ENCODE measurements at regions of chr2 and their contacts with region 1.

Region 1: GRCh38 chr2:206693399-206694137 is 24.6 kb downstream of the DYTN start:
- DNase-seq: no peak
- H3K4me3 ChIP-seq: no peak overlapping the region
- H3K27ac ChIP-seq: no peak overlapping the region
- H3K4me1 ChIP-seq: no peaks in the 10 kb centered on the region
- H3K27me3 ChIP-seq: no peaks in the 10 kb centered on the region
- CTCF ChIP-seq: peak; percentile 51 to 71 (median 58)
- EP300 ChIP-seq: no peak
- POLR2A ChIP-seq: no peak

Region 2: DNA sequence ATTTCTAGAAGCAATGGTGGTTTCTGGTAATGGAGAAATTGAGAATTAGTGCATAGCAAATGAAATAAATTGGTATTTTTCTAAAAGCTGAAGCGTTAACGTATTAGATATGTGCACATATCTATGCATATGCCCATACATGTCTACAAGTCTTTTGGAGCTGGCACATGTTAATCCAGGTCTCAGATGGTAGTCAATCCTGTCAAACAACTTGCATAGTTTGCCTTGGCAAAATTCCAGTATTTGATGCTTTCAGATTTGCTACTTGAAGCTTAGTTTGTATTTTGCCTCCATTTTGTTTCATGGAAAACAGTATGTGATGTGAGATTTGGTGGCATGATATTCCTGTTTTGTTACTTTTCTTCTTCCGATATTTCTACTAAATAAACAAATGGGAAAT is 1843.7 kb before region 1 on chr2:
- in situ Hi-C with region 1: no loop called
- intact Hi-C with region 1: no loop called
- DNase-seq: no peak
- H3K4me3 ChIP-seq: no peak overlapping the region
- H3K27ac ChIP-seq: no peak overlapping the region
- H3K4me1 ChIP-seq: no peaks in the 10 kb centered on the region
- H3K27me3 ChIP-seq: no peaks in the 10 kb centered on the region
- CTCF ChIP-seq: no peak
- EP300 ChIP-seq: no peak
- POLR2A ChIP-seq: no peak

Region 3: DNA sequence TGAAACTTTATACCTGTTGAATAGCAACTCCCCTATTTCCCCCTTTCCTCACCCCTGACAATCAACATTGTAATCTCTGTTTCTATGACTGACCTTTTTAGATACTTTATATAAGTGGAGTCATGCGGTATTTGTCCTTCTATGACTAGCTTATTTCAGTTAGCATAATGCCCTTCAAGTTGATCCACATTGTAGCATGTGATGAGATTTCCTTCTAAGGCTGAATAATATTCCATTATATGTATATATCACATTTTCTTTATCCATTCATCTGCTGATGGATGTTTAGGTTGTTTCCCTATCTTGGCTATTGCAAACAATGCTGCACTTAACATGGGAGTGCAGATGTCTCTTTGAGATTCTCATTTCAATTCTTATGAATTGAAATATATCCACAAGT is 81.3 kb after region 1 on chr2:
- in situ Hi-C with region 1: loop called in 2 of 4 experiments (anchors 10 kb)
- intact Hi-C with region 1: no loop called
- DNase-seq: no peak
- H3K4me3 ChIP-seq: no peak overlapping the region
- H3K27ac ChIP-seq: no peak overlapping the region
- H3K4me1 ChIP-seq: no peaks in the 10 kb centered on the region
- H3K27me3 ChIP-seq: no peaks in the 10 kb centered on the region
- CTCF ChIP-seq: no peak
- EP300 ChIP-seq: no peak
- POLR2A ChIP-seq: no peak

Region 4: GRCh38 chr2:206783718-206784117 is 90.2 kb after region 1 on chr2:
- in situ Hi-C with region 1: loop called in 2 of 4 experiments (anchors 10 kb)
- intact Hi-C with region 1: no loop called
- DNase-seq: no peak
- H3K4me3 ChIP-seq: no peak overlapping the region
- H3K27ac ChIP-seq: no peak overlapping the region
- H3K4me1 ChIP-seq: peaks cover 0 to 3% (median 0%) of the 10 kb centered on the region in 4 donors
- H3K27me3 ChIP-seq: no peaks in the 10 kb centered on the region
- CTCF ChIP-seq: peak in 2 of 5 experiments; percentile 23 to 24
- EP300 ChIP-seq: no peak
- POLR2A ChIP-seq: no peak

Region 5: DNA sequence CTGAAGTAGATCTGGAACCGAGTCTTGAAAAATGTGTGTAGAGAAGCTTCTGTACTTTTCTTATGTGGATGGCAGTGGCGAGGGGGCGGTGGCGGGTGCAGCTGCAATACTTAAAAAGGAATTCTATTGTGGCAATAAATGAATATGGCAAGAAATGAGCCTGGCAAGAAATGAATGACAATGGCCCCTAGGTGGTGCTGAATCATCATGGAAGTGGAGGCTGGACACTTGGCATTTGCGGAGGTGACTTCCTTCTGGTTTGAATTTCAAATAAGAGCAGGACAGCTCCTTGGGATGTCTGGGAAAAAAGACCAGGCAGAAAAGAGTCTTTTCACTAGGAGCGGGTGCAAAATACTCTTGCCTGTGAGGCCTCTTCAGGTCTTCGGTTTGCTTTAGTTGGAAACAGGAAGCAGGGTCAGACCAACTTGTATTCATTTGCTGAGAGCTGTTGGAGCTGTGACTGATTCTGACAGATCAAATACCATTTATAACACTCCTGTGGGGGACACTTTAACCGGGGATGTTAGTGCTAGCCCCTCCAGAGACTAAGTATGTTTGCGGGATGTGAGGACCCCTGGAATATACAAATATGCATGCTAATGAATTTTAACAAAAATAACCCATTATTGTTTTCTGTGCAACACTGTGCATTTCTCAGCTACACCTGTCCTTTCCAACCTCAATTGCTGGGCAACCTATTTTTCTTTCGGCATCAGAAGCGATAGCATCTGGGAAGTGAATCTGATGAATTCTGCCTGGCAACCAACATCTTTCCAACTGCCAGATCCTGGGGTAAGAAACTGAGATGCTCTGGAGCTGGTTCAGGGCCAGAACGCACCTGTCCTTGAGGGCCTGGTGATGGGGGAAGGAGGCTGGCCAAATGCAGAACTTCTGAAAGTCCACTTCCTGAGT is 107.2 kb after region 1 on chr2:
- in situ Hi-C with region 1: loop called in 1 of 4 experiments (anchors 10 kb)
- intact Hi-C with region 1: no loop called
- DNase-seq: peak; percentile 57
- H3K4me3 ChIP-seq: no peak overlapping the region
- H3K27ac ChIP-seq: no peak overlapping the region
- H3K4me1 ChIP-seq: peaks cover 0 to 9% (median 5%) of the 10 kb centered on the region in 4 donors
- H3K27me3 ChIP-seq: no peaks in the 10 kb centered on the region
- CTCF ChIP-seq: peak; percentile 56 to 74 (median 67)
- EP300 ChIP-seq: no peak
- POLR2A ChIP-seq: no peak

Region 6: GRCh38 chr2:206981739-206982340 is 288.3 kb after region 1 on chr2:
- in situ Hi-C with region 1: loop called in 1 of 4 experiments (anchors 25 kb)
- intact Hi-C with region 1: no loop called
- DNase-seq: peak; percentile 47
- H3K4me3 ChIP-seq: no peak overlapping the region
- H3K27ac ChIP-seq: no peak overlapping the region
- H3K4me1 ChIP-seq: peaks cover 0 to 16% (median 0%) of the 10 kb centered on the region in 4 donors
- H3K27me3 ChIP-seq: no peaks in the 10 kb centered on the region
- CTCF ChIP-seq: peak; percentile 52 to 65 (median 57)
- EP300 ChIP-seq: no peak
- POLR2A ChIP-seq: no peak

Region 7: GRCh38 chr2:207467716-207468347 is 774.3 kb after region 1 on chr2:
- in situ Hi-C with region 1: loop called in 2 of 4 experiments (anchors 5 to 10 kb)
- intact Hi-C with region 1: loop called (anchors 10 kb)
- DNase-seq: no peak
- H3K4me3 ChIP-seq: no peak overlapping the region
- H3K27ac ChIP-seq: no peak overlapping the region
- H3K4me1 ChIP-seq: peaks cover 0 to 4% (median under 1%) of the 10 kb centered on the region in 4 donors
- H3K27me3 ChIP-seq: no peaks in the 10 kb centered on the region
- CTCF ChIP-seq: no peak
- EP300 ChIP-seq: no peak
- POLR2A ChIP-seq: no peak

Region 8: DNA sequence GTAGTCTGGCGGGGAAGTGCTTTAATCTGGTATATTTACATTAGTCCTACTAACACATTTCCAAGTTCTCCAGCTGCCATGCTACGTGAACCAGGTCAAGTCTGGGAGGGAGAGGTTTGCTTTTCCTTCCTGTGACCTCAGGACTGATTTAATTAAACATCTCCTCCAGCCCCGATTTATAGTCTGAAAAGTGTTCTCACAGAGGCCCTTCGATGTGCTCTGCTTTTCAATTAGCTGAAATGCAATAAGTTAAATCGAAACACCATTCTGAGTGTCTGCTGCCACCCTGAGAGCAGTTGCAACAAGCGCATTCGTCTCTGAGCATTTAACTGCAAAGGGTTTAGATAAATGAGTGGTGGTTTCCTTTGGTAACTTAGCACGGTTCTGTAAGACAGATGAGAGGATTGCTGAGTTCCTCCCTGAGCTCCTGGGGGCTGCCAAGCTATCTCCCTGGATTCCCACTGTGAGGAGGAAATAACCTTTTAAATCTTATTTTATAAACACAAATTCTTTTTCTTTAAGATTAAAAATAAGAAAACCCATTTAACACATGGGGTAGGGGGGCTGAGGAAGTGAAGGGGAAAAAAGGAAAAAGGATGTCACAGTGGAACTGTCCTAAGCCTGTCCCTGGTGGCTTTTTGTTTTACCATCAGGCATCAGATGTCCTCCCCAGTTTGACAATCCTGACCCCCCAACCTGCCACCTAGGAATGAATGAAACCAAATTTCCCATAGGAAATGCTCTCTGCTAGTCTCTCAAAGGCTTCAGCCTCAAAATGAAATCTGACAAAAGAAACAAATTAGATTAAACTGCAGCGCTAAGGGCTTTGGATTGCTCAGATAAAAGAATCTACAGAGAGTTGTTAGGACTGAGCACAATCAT is 779.7 kb after region 1 on chr2:
- in situ Hi-C with region 1: loop called in 2 of 4 experiments (anchors 5 to 10 kb)
- intact Hi-C with region 1: loop called (anchors 10 kb)
- DNase-seq: no peak
- H3K4me3 ChIP-seq: no peak overlapping the region
- H3K27ac ChIP-seq: peak overlapping the region in 2 of 4 donors; percentile 2 to 7
- H3K4me1 ChIP-seq: peaks cover 0 to 17% (median 9%) of the 10 kb centered on the region in 4 donors
- H3K27me3 ChIP-seq: no peaks in the 10 kb centered on the region
- CTCF ChIP-seq: peak; percentile 30 to 46 (median 34)
- EP300 ChIP-seq: no peak
- POLR2A ChIP-seq: no peak